ENCODE measurements at regions of chr18 and their contacts with region 1.

Region 1: DNA sequence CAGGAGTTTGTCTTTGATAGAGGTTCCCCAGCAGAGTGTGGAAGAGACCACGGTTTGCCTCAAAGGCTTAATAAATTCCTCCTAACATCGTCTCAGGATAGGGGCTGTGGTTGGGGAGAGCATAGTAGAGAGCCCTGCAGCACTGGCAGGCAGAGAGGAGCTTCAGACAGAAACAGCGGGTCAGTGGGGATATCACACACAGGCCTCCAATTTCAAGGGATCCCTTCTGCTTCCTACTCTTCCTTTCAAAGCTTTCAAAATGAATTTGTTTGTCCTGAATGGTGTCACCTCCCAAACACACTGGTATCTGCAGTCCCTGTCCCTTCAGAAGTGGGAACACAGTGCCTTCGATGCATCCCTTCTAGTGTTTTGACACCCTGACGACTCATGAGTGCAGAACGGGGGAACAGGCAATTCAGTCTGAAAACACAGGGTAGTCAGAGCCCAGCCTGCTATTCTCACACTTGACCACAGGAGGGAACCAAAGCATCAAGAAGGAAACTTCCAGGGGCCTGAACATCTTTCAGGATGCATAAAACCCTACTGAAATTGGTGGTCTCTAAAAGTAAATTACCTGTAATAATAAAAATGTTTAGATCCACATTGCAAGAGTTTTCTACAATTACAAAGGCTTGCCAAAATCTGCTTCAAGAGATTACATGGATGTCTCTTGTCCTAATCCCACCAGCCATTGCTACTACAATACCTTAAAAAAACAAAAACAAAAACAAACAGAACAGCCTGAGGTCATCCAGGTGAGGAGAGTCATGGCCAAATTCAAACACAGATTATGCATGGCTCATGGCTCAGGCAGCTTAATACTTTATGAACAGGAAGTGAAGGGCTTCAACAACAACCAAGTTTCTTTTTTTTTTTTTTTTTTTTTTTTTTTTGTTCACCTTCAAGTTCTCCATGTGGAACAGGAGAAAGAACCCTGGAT is 49.8 kb downstream of the SLC14A2 start:
- DNase-seq: no peak
- ATAC-seq: peak; percentile 85
- H3K4me3 ChIP-seq: no peak overlapping the region
- H3K27ac ChIP-seq: no peak overlapping the region
- H3K4me1 ChIP-seq: peaks cover 18% of the 10 kb centered on the region
- H3K27me3 ChIP-seq: no peaks in the 10 kb centered on the region
- CTCF ChIP-seq: peak; percentile 92 to 95 (median 95)
- EP300 ChIP-seq: no peak
- POLR2A ChIP-seq: no peak
- RAD21 ChIP-seq: peak; percentile 97

Region 2: GRCh38 chr18:45059695-45060094 is 605.4 kb before region 1 on chr18:
- CTCF ChIA-PET with region 1: no interaction called
- POLR2A ChIA-PET with region 1: no interaction called
- RAD21 ChIA-PET with region 1: no interaction called
- SMC1A ChIA-PET with region 1: no interaction called
- in situ Hi-C with region 1: no loop called
- intact Hi-C with region 1: no loop called
- DNase-seq: no peak
- ATAC-seq: peak; percentile 25; the same call in 2 of the 3 replicates
- H3K4me3 ChIP-seq: no peak overlapping the region
- H3K27ac ChIP-seq: no peak overlapping the region
- H3K4me1 ChIP-seq: no peaks in the 10 kb centered on the region
- H3K27me3 ChIP-seq: no peaks in the 10 kb centered on the region
- CTCF ChIP-seq: no peak
- EP300 ChIP-seq: no peak
- POLR2A ChIP-seq: no peak
- RAD21 ChIP-seq: no peak

Region 3: GRCh38 chr18:45628968-45629958 is 35.8 kb before region 1 on chr18:
- CTCF ChIA-PET with region 1: no interaction called
- POLR2A ChIA-PET with region 1: no interaction called
- RAD21 ChIA-PET with region 1: no interaction called
- SMC1A ChIA-PET with region 1: no interaction called
- in situ Hi-C with region 1: no loop called
- intact Hi-C with region 1: no loop called
- DNase-seq: no peak
- ATAC-seq: no peak
- H3K4me3 ChIP-seq: no peak overlapping the region
- H3K27ac ChIP-seq: no peak overlapping the region
- H3K4me1 ChIP-seq: no peaks in the 10 kb centered on the region
- H3K27me3 ChIP-seq: no peaks in the 10 kb centered on the region; a peak in 2 of 4 replicates
- CTCF ChIP-seq: no peak
- EP300 ChIP-seq: no peak
- POLR2A ChIP-seq: no peak
- RAD21 ChIP-seq: no peak

Region 4: DNA sequence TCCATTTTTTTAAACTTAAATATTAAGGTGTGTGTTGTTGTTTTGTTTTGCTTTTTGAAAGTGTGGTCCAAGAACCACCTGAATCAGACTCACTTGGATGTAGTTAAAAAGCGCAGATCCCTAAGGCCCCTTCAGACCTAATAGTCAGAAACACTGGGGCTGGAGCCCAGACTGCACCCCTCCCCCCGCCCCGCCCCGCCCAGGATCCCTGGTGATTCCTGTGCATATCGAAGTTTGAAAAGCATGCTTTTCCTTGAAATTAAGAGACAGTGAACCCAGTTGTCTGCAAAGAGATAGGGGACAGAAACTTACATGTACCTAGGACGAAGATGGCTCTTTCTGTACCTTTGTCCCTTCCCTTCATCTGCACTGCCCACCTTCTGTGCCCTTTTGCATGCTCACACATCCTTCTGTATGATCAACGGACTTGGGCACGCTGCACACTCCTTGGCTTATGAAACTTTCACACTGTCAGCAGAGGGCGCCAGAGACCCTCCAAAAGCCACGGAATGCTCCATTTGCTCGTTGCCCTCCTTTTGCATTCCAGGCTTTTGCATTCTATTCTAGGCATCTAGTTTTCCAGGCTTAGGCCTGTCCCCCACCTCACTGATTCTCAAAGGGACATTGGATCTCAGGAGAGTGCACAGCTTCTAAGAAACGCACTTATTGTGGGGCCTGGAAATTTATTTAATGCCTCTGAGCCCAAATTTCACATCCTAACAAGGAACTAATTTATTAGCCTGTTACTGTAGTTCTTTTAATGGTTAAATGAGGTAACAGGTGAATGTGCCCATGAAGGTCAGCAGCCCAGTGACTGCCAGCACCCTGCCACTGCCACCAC is 26.1 kb after region 1 on chr18:
- CTCF ChIA-PET with region 1: interaction called, 189 read pairs
- POLR2A ChIA-PET with region 1: interaction called, 39 read pairs
- RAD21 ChIA-PET with region 1: interaction called, 132 read pairs
- SMC1A ChIA-PET with region 1: interaction called, 143 read pairs
- in situ Hi-C with region 1: no loop called
- intact Hi-C with region 1: loop called (anchors 1 kb)
- DNase-seq: no peak
- ATAC-seq: peak; percentile 28
- H3K4me3 ChIP-seq: no peak overlapping the region
- H3K27ac ChIP-seq: no peak overlapping the region
- H3K4me1 ChIP-seq: peaks cover 32% of the 10 kb centered on the region
- H3K27me3 ChIP-seq: no peaks in the 10 kb centered on the region
- CTCF ChIP-seq: peak; percentile 79 to 93 (median 82)
- EP300 ChIP-seq: no peak
- POLR2A ChIP-seq: no peak
- RAD21 ChIP-seq: peak; percentile 91

Region 5: DNA sequence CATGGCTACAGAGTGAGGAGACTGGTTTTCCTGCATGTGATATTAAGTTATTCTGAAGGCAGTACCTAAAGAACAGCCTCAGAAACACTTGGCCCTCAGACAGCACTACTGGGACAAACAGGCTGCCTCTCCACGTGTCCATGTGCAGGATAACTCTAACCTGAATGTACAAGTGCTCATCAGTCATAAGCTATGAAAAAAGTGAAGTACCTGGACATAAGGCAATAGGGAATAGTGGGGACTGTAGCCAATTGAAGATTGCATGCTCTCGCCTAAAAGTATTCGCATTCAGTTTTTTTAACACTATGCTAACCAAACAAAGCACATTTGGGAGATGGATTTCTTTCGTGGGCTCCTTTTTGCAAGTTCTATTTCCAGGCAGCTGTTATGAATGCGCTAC is 91.9 kb after region 1 on chr18:
- CTCF ChIA-PET with region 1: no interaction called
- POLR2A ChIA-PET with region 1: no interaction called
- RAD21 ChIA-PET with region 1: no interaction called
- SMC1A ChIA-PET with region 1: no interaction called
- in situ Hi-C with region 1: no loop called
- intact Hi-C with region 1: no loop called
- DNase-seq: no peak
- ATAC-seq: no peak
- H3K4me3 ChIP-seq: no peak overlapping the region
- H3K27ac ChIP-seq: no peak overlapping the region
- H3K4me1 ChIP-seq: no peaks in the 10 kb centered on the region
- H3K27me3 ChIP-seq: no peaks in the 10 kb centered on the region; a peak in 2 of 4 replicates
- CTCF ChIP-seq: no peak
- EP300 ChIP-seq: no peak
- POLR2A ChIP-seq: no peak
- RAD21 ChIP-seq: no peak

Region 6: GRCh38 chr18:45802608-45803492 is 137.8 kb after region 1 on chr18:
- CTCF ChIA-PET with region 1: interaction called, 14 read pairs
- POLR2A ChIA-PET with region 1: no interaction called
- RAD21 ChIA-PET with region 1: interaction called, 10 read pairs
- SMC1A ChIA-PET with region 1: interaction called, 11 read pairs
- in situ Hi-C with region 1: no loop called
- intact Hi-C with region 1: no loop called
- DNase-seq: no peak
- ATAC-seq: no peak
- H3K4me3 ChIP-seq: no peak overlapping the region
- H3K27ac ChIP-seq: no peak overlapping the region
- H3K4me1 ChIP-seq: no peaks in the 10 kb centered on the region
- H3K27me3 ChIP-seq: no peaks in the 10 kb centered on the region
- CTCF ChIP-seq: no peak
- EP300 ChIP-seq: no peak
- POLR2A ChIP-seq: no peak
- RAD21 ChIP-seq: no peak

Region 7: GRCh38 chr18:45896991-45897390 is 231.9 kb after region 1 on chr18:
- CTCF ChIA-PET with region 1: interaction called, 3 read pairs
- POLR2A ChIA-PET with region 1: no interaction called
- RAD21 ChIA-PET with region 1: interaction called, 4 read pairs
- SMC1A ChIA-PET with region 1: interaction called, 11 read pairs
- in situ Hi-C with region 1: no loop called
- intact Hi-C with region 1: no loop called
- DNase-seq: no peak
- ATAC-seq: no peak
- H3K4me3 ChIP-seq: no peak overlapping the region
- H3K27ac ChIP-seq: no peak overlapping the region
- H3K4me1 ChIP-seq: no peaks in the 10 kb centered on the region
- H3K27me3 ChIP-seq: no peaks in the 10 kb centered on the region
- CTCF ChIP-seq: no peak
- EP300 ChIP-seq: no peak
- POLR2A ChIP-seq: no peak
- RAD21 ChIP-seq: no peak

Region 8: DNA sequence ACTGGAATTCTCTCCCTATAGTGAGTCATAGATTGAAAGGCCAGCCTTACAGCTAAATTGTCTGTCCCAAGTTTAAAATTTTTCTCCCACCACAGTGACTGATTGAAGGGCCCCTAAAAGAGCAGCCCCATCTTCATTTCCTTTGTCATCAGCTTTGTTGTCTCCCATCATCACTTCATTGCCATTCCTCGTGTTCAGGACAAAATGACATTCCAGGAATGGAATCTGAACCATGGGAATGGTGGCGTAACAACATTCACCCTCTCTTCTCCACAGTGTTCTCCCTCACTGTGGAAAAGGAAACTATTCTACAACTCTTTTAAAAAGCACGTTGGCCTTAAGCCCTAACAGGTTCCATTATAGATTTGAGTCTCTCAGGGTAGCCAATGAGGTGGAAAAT is 354.8 kb after region 1 on chr18:
- CTCF ChIA-PET with region 1: no interaction called
- POLR2A ChIA-PET with region 1: interaction called, 10 read pairs
- RAD21 ChIA-PET with region 1: no interaction called
- SMC1A ChIA-PET with region 1: no interaction called
- in situ Hi-C with region 1: no loop called
- intact Hi-C with region 1: no loop called
- DNase-seq: no peak
- ATAC-seq: no peak
- H3K4me3 ChIP-seq: no peak overlapping the region
- H3K27ac ChIP-seq: no peak overlapping the region
- H3K4me1 ChIP-seq: no peaks in the 10 kb centered on the region
- H3K27me3 ChIP-seq: no peaks in the 10 kb centered on the region; a peak in 1 of 4 replicates
- CTCF ChIP-seq: no peak
- EP300 ChIP-seq: no peak
- POLR2A ChIP-seq: no peak
- RAD21 ChIP-seq: no peak

Measured in GM12878 (cell line).